ENCODE measurements at regions of chr13 and their contacts with region 1.

Region 1: DNA sequence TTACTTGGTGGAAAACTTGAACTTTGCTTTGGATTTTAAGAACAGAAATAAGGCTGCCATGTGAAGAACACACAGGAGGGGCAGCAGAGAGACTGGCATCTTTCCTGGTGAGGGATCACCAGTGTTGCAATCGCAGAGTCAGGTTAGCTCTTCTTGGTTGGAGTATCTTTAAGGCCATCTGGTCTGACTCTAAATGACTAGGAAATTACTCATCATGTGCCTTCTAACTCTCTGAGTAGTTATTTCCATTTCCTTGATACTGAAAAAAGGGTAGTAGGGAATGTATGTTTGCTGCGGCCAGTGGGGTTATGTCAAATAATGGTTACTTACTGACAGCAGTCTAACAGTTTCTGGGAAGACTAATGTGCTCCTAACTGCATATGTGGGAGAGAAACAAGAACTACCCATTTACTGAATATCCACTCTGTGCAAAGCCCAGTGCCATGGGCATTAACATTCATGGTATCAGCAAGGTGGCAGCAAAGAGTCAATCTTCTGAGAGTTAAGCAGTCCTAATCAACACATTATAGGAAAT is 122.1 kb downstream of the COG6 start:
- DNase-seq: peak; percentile 72
- H3K4me3 Mint-ChIP-seq: peak overlapping the region; percentile 47
- H3K27ac Mint-ChIP-seq: peak overlapping the region; percentile 92
- H3K4me1 Mint-ChIP-seq: peaks cover 36% of the 10 kb centered on the region
- H3K27me3 Mint-ChIP-seq: no peaks in the 10 kb centered on the region

Region 2: DNA sequence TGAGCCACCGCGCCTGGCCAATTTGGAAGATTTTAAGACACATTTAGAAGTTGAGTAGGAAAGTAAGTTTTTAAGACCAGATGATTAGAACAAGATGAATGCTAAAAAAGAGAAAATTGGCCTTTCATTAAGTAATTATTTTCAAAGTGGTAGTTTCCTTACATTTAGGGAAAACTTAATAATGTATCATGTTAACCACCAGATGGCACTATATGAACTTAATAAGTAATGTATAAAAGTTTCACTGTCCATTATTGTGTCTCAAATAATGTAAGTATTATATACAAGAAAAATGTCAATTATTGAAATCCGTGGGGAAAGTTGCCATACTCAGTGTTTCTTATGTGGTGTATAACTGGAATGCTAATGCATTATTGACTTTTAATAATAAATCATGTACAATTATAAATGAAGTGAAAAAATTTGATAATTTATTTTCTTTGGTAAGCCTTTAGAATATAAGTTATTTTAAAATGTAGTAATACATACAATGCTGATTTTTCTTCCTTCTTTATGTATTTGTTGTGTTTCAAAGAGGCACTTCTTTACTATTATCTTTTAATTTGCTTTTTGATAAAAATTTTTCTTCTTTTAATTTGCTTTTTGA is 93.0 kb before region 1 on chr13:
- intact Hi-C with region 1: loop called (anchors 1 kb)
- DNase-seq: no peak
- H3K4me3 Mint-ChIP-seq: no peak overlapping the region
- H3K27ac Mint-ChIP-seq: no peak overlapping the region
- H3K4me1 Mint-ChIP-seq: peaks cover 18% of the 10 kb centered on the region
- H3K27me3 Mint-ChIP-seq: no peaks in the 10 kb centered on the region

Region 3: DNA sequence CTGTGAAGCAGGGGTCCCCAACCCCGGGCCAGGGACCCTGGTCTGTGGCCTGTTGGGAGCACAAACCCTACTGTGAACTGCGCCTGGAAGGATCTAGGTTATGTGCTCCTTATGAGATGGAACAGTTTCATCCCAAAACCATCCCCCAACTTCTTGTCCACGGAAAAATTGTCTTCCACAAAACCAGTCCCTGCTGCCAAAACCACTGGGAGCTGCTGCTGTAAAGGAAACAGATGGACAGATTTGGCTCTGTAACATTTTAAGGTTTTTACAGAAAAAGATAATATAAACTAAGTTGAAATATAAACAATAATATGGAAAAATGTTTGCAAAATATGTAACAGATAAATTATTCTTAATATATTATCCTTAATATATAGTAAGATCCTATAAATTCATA is 48.4 kb before region 1 on chr13:
- intact Hi-C with region 1: no loop called
- DNase-seq: no peak
- H3K4me3 Mint-ChIP-seq: no peak overlapping the region
- H3K27ac Mint-ChIP-seq: no peak overlapping the region
- H3K4me1 Mint-ChIP-seq: no peaks in the 10 kb centered on the region
- H3K27me3 Mint-ChIP-seq: no peaks in the 10 kb centered on the region

Region 4: DNA sequence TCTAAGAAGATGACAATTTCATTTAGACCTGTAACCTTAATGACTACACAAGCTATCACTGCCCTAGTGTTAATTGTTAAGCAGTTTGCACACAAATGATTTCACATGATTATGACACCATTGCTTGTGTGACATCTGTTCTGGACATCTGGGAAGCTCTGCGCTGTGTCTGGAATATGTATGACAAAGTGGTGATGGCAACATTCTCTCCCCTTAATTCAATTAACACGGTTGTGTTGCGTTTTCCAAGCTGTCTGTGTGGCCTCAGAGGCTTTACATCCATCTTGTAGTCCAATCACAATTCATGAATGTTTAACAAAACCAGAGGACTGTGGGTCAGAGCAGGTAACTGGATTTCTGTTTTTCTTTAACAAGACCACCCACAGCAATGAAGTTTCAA is 82.3 kb after region 1 on chr13:
- intact Hi-C with region 1: no loop called
- DNase-seq: no peak
- H3K4me3 Mint-ChIP-seq: no peak overlapping the region
- H3K27ac Mint-ChIP-seq: no peak overlapping the region
- H3K4me1 Mint-ChIP-seq: peaks cover 3% of the 10 kb centered on the region
- H3K27me3 Mint-ChIP-seq: peaks cover 15% of the 10 kb centered on the region

Region 5: GRCh38 chr13:39942552-39943273 is 165.1 kb after region 1 on chr13:
- intact Hi-C with region 1: loop called (anchors 5 kb)
- DNase-seq: peak; percentile 91
- H3K4me3 Mint-ChIP-seq: no peak overlapping the region
- H3K27ac Mint-ChIP-seq: no peak overlapping the region
- H3K4me1 Mint-ChIP-seq: peaks cover 13% of the 10 kb centered on the region
- H3K27me3 Mint-ChIP-seq: peaks cover 3% of the 10 kb centered on the region

Region 6: DNA sequence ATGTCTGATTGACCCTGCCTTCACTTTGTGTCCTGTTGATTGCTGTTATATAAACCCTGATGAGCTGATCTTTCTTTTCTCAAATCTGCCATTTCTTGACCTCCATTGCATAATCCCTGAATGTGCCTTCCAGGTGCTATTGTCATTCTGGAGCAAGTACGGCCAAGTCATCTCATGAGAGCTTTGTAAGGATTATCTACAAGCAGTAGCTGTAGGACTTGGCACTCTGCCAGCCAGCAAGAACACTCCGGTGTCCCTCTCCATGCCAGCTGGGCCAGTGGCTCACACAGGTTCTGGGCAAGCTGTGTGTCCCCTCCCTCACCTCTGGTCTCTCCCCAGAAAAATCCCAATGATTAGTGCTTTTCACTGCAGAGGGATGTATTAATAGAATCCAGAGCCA is 540.8 kb after region 1 on chr13:
- intact Hi-C with region 1: loop called (anchors 10 kb)
- DNase-seq: no peak
- H3K4me3 Mint-ChIP-seq: no peak overlapping the region
- H3K27ac Mint-ChIP-seq: peak overlapping the region; percentile 47
- H3K4me1 Mint-ChIP-seq: peaks cover 58% of the 10 kb centered on the region
- H3K27me3 Mint-ChIP-seq: no peaks in the 10 kb centered on the region

Region 7: DNA sequence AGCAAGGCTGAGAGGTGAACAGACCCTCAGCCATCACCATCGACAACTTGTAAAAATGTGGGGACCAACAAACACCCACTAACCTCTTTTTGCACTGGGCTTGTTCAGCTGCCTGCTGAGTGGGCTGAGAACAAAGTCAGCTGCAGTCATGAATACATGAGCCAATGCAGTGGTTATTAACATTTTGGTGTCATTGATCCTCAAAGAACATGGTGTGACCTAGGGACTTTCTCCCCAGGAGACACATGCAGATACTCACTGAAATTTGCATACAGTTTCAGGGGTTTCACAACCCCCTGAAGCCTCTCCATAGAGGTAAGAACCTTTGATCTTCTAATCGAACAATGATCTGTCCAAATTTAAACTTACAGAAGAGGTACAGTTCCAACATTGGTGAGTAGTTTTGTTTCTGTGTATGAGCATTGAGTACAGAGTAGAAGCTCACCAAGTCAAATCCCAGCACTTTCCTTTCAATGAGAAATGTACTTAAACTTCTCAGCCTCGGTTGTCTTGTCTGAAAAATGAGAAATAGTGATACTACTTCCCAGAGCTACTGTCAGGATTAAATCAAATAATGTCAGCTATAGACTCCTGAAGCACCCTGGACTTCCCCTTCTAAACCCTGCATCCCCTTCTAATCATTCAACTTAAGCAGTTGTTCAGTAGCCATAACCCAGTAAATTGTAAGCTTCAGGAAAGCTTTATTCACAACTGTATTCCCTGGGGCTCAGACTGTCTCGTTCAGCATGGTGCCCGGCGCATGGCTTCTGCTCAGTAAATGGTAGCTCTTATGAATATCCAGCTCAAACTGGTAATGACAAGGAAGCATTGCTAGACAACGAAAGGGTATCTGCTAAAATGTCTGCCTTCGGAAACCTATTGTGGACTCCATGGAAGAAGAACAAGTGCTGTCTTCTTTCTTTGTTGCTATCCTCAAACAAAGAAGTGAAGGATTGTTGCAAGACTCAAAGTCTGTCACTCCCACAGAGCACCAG is 740.2 kb after region 1 on chr13:
- intact Hi-C with region 1: loop called (anchors 2 kb)
- DNase-seq: no peak
- H3K4me3 Mint-ChIP-seq: peak overlapping the region; percentile 72
- H3K27ac Mint-ChIP-seq: peak overlapping the region; percentile 92
- H3K4me1 Mint-ChIP-seq: peaks cover 63% of the 10 kb centered on the region
- H3K27me3 Mint-ChIP-seq: no peaks in the 10 kb centered on the region

Measured in activated CD4-positive, alpha-beta T cell treated with anti-CD3 and anti-CD28 coated beads, Interleukin-2, amount 10 ng/mL, durations not matched to agents 24 days and 14 days (primary cell).